GM12878 (cell line): ENCODE measurements at regions of chr6 and their contacts with region 1.

Region 1: DNA sequence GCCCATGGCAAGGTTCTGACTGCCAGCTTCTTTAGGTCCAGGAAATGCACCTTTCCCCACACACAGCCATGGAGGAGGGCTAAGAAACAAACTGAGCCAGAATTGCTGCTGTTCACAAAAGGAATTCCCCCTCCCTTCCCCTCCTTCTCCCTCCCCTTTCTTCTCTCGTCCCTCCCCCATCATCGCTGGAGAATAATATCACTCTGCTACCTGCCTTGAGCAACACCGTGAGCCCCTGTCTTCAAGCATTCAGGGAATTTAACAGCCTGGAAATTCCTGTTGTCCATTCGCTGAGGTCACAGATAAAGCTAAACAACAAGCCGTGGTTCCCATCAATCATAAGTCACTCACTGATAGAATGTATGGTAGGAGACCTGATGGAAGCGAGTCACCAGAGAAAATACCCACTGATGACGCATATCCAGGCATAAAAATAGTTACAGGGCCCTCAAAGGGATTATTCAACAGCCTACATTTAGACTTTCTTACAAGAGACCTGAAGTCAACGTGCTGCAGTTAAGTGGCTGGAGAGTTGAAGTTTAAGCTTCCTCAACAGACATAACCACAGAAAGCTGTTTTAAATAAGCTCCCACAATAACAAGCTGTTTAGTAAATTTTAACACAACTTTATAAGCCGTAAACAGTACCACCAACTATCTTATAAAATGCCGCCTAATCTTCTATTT is 59.7 kb downstream of the HIVEP2 start:
- DNase-seq: peak; percentile 89
- ATAC-seq: peak; percentile 70
- H3K4me3 ChIP-seq: peak overlapping the region; percentile 57
- H3K27ac ChIP-seq: peak overlapping the region; percentile 75
- H3K4me1 ChIP-seq: peaks cover 38% of the 10 kb centered on the region
- H3K27me3 ChIP-seq: no peaks in the 10 kb centered on the region
- CTCF ChIP-seq: no peak
- EP300 ChIP-seq: peak; percentile 93 to 97
- POLR2A ChIP-seq: peak; percentile 49
- RAD21 ChIP-seq: peak; percentile 14; the same call in 1 of the 2 replicates

Region 2: DNA sequence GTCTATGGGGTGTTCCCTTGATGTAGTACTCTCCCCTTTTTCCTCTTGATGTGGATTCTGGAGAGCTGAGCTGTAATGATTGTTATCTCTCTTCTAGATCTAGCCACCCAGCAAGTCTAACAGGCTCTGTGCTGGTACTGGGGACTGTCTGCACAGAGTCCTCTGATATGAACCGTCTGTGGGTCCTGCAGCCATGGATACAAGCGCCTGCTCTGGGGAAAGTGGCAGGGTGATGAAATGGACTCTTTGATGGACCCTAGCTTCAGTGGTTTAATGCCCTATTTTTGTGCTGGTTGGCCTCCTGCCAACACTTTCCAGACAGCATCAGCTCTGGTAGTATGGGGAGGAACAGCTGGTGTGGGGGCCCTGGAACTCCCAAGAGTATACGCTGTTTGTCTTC is 367.2 kb before region 1 on chr6:
- CTCF ChIA-PET with region 1: no interaction called
- POLR2A ChIA-PET with region 1: no interaction called
- RAD21 ChIA-PET with region 1: no interaction called
- SMC1A ChIA-PET with region 1: no interaction called
- in situ Hi-C with region 1: no loop called
- intact Hi-C with region 1: no loop called
- DNase-seq: no peak
- ATAC-seq: no peak
- H3K4me3 ChIP-seq: no peak overlapping the region
- H3K27ac ChIP-seq: no peak overlapping the region
- H3K4me1 ChIP-seq: no peaks in the 10 kb centered on the region
- H3K27me3 ChIP-seq: no peaks in the 10 kb centered on the region; a peak in 1 of 4 replicates
- CTCF ChIP-seq: no peak
- EP300 ChIP-seq: no peak
- POLR2A ChIP-seq: no peak
- RAD21 ChIP-seq: no peak

Region 3: DNA sequence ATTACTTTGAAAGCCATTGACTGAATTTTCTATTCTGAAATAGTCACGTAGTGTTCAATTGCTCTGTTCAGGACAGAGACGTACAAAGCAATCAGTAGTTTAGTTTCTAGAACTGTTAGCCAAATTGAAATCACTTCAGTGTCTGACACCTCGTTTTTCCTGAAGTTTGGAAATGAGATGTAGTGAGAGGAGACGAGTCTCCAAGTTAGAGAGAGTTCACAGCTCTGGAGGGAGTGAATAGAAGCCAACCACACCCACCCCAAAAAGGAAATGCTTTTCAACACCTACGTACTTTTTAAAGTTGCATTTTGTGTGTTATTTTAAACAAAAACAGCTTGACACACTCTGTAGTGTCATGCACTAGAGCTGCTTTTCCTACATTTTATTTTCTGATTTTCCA is 287.5 kb before region 1 on chr6:
- CTCF ChIA-PET with region 1: no interaction called
- POLR2A ChIA-PET with region 1: no interaction called
- RAD21 ChIA-PET with region 1: no interaction called
- SMC1A ChIA-PET with region 1: no interaction called
- in situ Hi-C with region 1: no loop called
- intact Hi-C with region 1: no loop called
- DNase-seq: no peak
- ATAC-seq: no peak
- H3K4me3 ChIP-seq: no peak overlapping the region
- H3K27ac ChIP-seq: no peak overlapping the region
- H3K4me1 ChIP-seq: no peaks in the 10 kb centered on the region
- H3K27me3 ChIP-seq: no peaks in the 10 kb centered on the region
- CTCF ChIP-seq: no peak
- EP300 ChIP-seq: no peak
- POLR2A ChIP-seq: no peak
- RAD21 ChIP-seq: no peak

Region 4: GRCh38 chr6:142712231-142712630 is 173.1 kb before region 1 on chr6:
- CTCF ChIA-PET with region 1: no interaction called
- POLR2A ChIA-PET with region 1: no interaction called
- RAD21 ChIA-PET with region 1: no interaction called
- SMC1A ChIA-PET with region 1: no interaction called
- in situ Hi-C with region 1: no loop called
- intact Hi-C with region 1: no loop called
- DNase-seq: no peak
- ATAC-seq: no peak
- H3K4me3 ChIP-seq: no peak overlapping the region
- H3K27ac ChIP-seq: no peak overlapping the region
- H3K4me1 ChIP-seq: no peaks in the 10 kb centered on the region
- H3K27me3 ChIP-seq: no peaks in the 10 kb centered on the region
- CTCF ChIP-seq: no peak
- EP300 ChIP-seq: no peak
- POLR2A ChIP-seq: no peak
- RAD21 ChIP-seq: no peak

Region 5: DNA sequence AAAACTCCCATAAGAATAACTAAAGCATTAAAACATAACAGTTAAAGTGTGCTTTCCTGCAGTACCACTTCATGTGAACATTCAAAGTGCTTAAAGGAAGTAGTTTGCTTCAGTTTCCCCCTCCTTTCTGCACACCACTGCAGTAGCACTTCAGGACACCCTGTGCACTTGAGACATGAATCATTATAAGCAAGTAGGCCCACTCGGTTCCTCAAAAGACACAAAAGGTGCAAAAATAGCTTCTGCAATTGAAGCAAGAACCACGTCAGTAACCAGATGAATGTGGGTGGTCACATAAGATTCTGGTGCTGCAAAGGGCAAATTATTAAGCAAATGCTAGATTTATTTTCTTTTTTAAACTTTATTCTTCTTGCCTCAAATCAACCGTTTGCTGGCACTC is 101.0 kb before region 1 on chr6:
- CTCF ChIA-PET with region 1: no interaction called
- POLR2A ChIA-PET with region 1: interaction called, 3 read pairs
- RAD21 ChIA-PET with region 1: interaction called, 24 read pairs
- SMC1A ChIA-PET with region 1: interaction called, 4 read pairs
- in situ Hi-C with region 1: no loop called
- intact Hi-C with region 1: no loop called
- DNase-seq: peak; percentile 86
- ATAC-seq: peak; percentile 99
- H3K4me3 ChIP-seq: no peak overlapping the region
- H3K27ac ChIP-seq: peak overlapping the region; percentile 76
- H3K4me1 ChIP-seq: peaks cover 11% of the 10 kb centered on the region; the same call in 1 of the 2 replicates
- H3K27me3 ChIP-seq: no peaks in the 10 kb centered on the region
- CTCF ChIP-seq: no peak
- EP300 ChIP-seq: peak; percentile 86 to 97
- POLR2A ChIP-seq: no peak
- RAD21 ChIP-seq: peak; percentile 43; the same call in 1 of the 2 replicates

Region 6: GRCh38 chr6:142827369-142827768 is 58.0 kb before region 1 on chr6:
- CTCF ChIA-PET with region 1: interaction called, 4 read pairs
- POLR2A ChIA-PET with region 1: interaction called, 8 read pairs
- RAD21 ChIA-PET with region 1: interaction called, 110 read pairs
- SMC1A ChIA-PET with region 1: interaction called, 201 read pairs
- in situ Hi-C with region 1: no loop called
- intact Hi-C with region 1: no loop called
- DNase-seq: no peak
- ATAC-seq: no peak
- H3K4me3 ChIP-seq: no peak overlapping the region
- H3K27ac ChIP-seq: no peak overlapping the region
- H3K4me1 ChIP-seq: peaks cover 10% of the 10 kb centered on the region
- H3K27me3 ChIP-seq: no peaks in the 10 kb centered on the region
- CTCF ChIP-seq: no peak
- EP300 ChIP-seq: no peak
- POLR2A ChIP-seq: no peak
- RAD21 ChIP-seq: no peak

Region 7: DNA sequence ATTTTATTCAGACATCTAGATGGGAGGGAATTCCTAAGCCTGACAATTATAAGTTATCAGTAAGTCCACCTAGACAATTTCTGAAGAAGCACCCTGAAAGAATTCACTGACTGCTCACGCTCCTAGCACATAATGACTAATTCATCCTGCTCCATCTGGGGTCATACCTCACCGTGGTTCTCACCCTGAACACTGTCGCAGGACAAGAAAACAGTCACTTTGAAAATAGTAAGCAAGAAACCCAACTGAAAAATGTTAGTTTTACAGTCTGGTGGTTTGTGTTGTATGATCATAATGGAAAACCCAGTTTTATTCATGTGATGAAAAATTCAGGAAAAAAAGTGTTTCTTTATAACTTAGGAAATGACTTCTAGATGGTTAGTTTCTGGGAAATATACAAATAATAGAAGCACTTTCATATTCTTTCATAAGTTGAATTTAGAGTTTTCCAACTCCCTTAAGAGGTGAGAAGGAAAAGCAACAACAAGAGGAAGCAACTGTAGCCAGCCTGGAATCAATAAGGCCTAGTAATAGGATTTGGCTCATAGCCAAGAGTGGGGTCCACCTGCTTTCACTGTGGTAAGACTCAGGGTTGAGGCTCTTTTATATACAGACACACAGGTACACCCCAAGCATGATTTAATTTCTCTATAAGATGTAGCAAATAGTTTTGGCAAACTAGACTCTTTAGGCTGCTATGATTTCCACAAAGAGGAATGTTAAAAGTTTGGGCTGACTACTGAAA is 34.5 kb before region 1 on chr6:
- CTCF ChIA-PET with region 1: interaction called, 17 read pairs
- POLR2A ChIA-PET with region 1: interaction called, 78 read pairs
- RAD21 ChIA-PET with region 1: interaction called, 150 read pairs
- SMC1A ChIA-PET with region 1: interaction called, 287 read pairs
- in situ Hi-C with region 1: no loop called
- intact Hi-C with region 1: loop called (anchors 1 kb)
- DNase-seq: peak; percentile 64
- ATAC-seq: peak; percentile 57
- H3K4me3 ChIP-seq: peak overlapping the region; percentile 26; the same call in 1 of the 2 replicates
- H3K27ac ChIP-seq: peak overlapping the region; percentile 98
- H3K4me1 ChIP-seq: peaks cover 95% of the 10 kb centered on the region
- H3K27me3 ChIP-seq: no peaks in the 10 kb centered on the region
- CTCF ChIP-seq: no peak
- EP300 ChIP-seq: peak; percentile 63 to 64; a peak in 3 of 4 replicates
- POLR2A ChIP-seq: 0 out of 2 replicates have a peak, but pooled peaks have one; percentile 37
- RAD21 ChIP-seq: peak; percentile 46

Region 8: GRCh38 chr6:142871910-142872331 is 13.4 kb before region 1 on chr6:
- CTCF ChIA-PET with region 1: interaction called, 20 read pairs
- POLR2A ChIA-PET with region 1: interaction called, 51 read pairs
- RAD21 ChIA-PET with region 1: interaction called, 79 read pairs
- SMC1A ChIA-PET with region 1: interaction called, 122 read pairs
- in situ Hi-C with region 1: no loop called
- intact Hi-C with region 1: no loop called
- DNase-seq: no peak
- ATAC-seq: peak; percentile 88
- H3K4me3 ChIP-seq: no peak overlapping the region
- H3K27ac ChIP-seq: peak overlapping the region; percentile 50
- H3K4me1 ChIP-seq: peaks cover 35% of the 10 kb centered on the region
- H3K27me3 ChIP-seq: no peaks in the 10 kb centered on the region
- CTCF ChIP-seq: no peak
- EP300 ChIP-seq: peak; percentile 81 to 87
- POLR2A ChIP-seq: no peak
- RAD21 ChIP-seq: no peak; the same call in 1 of the 2 replicates

Region 9: DNA sequence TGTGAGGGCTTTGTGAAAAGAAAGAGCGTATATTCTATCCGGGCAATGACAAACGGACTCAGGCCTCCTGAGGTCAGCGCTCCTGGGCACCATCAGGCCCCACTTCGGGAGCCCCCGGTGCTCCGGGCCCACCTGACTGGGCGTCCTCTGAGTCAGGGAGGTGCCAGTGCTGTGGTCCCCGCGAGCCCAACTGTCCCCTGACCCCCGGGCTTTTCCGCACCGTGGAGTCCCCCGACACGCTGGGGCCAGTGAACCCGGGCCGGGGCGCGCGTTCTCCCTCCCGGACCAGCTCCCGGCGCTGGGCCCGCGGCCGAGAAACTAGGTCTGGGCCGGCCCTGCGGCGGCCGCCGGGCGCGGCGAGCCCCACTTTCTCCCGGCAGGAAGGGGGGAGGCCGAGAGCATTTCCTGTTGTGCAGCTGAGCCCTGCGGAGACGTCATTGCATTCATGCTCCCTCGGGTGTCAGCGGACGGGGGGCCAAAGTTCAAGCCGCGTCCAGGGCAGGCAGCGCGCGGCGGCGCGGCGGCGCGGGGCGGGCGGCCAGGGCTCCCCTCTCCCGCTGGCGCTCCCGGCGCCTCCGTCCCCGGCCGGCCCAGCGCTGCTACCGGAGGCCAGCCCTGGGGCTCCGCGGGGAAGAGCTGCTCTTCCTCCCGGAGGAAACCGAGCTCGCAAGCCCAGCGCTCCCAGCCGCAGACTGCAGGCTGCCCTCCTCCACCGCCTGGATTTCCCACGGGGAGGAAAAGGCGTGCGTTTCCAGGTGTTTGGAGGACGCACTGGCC is 41.4 kb after region 1 on chr6:
- CTCF ChIA-PET with region 1: interaction called, 4 read pairs
- POLR2A ChIA-PET with region 1: interaction called, 13 read pairs
- RAD21 ChIA-PET with region 1: interaction called, 5 read pairs
- SMC1A ChIA-PET with region 1: interaction called, 35 read pairs
- in situ Hi-C with region 1: no loop called
- intact Hi-C with region 1: no loop called
- DNase-seq: no peak
- ATAC-seq: peak; percentile 80
- H3K4me3 ChIP-seq: peak overlapping the region; percentile 88
- H3K27ac ChIP-seq: peak overlapping the region; percentile 97
- H3K4me1 ChIP-seq: peaks cover 8% of the 10 kb centered on the region
- H3K27me3 ChIP-seq: no peaks in the 10 kb centered on the region
- CTCF ChIP-seq: no peak
- EP300 ChIP-seq: peak; percentile 64 to 66; a peak in 2 of 4 replicates
- POLR2A ChIP-seq: peak; percentile 86
- RAD21 ChIP-seq: no peak